Gastrocnemius medialis (tissue), 4 donors: ENCODE measurements at regions of chr19 and their contacts with region 1.

Region 1: DNA sequence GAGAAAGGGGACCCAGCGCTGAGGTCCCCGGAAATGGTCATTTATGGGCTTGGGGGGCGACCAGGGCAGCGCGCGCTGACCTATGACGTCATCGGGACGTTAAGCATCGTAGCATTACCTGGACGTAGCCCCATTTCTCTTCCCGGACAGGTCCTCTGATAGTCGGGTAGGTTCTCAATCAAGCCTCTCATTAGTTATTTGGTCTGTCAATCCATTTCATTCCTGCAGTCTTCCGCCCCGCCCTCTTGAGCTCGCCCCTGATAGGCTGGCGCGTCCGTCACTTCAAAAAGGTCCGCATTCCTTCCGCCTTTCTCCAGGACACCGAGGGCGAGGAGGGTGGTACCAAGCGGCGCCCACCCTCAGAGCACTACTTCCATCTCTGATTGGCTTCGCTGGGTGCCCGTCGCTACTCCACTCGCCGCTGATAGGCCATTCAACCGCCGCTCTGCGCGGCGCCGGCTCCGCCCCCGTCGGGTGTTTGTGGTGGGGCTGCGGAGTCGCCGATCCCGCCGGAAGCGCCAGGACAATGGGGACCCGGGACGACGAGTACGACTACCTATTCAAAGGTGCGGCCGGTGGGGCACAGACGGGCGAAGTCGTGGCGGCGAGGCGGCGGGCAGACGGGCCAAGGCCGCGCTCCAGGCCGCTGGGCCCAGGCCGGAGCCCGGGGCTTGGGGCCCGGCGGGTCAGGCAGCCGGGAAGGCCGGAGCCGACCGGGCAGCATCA is at the start of gene RAB11B:
- DNase-seq: peak; percentile 99 to 100
- ATAC-seq: peak; percentile 85 to 88
- H3K4me3 ChIP-seq: peak within 1 kb of the TSS; percentile 68 to 100 (median 72)
- H3K27ac ChIP-seq: peak within 1 kb of the TSS; percentile 96 to 100 (median 100)
- H3K4me1 ChIP-seq: peaks cover 46 to 53% of the 10 kb centered on the region in 2 donors
- H3K27me3 ChIP-seq: no peaks in the 10 kb centered on the region
- CTCF ChIP-seq: no peak
- POLR2A ChIP-seq: peak; percentile 69 to 79
- total RNA-seq, gene RAB11B: 13.4 to 42.9 (median 31.0) TPM

Region 2: DNA sequence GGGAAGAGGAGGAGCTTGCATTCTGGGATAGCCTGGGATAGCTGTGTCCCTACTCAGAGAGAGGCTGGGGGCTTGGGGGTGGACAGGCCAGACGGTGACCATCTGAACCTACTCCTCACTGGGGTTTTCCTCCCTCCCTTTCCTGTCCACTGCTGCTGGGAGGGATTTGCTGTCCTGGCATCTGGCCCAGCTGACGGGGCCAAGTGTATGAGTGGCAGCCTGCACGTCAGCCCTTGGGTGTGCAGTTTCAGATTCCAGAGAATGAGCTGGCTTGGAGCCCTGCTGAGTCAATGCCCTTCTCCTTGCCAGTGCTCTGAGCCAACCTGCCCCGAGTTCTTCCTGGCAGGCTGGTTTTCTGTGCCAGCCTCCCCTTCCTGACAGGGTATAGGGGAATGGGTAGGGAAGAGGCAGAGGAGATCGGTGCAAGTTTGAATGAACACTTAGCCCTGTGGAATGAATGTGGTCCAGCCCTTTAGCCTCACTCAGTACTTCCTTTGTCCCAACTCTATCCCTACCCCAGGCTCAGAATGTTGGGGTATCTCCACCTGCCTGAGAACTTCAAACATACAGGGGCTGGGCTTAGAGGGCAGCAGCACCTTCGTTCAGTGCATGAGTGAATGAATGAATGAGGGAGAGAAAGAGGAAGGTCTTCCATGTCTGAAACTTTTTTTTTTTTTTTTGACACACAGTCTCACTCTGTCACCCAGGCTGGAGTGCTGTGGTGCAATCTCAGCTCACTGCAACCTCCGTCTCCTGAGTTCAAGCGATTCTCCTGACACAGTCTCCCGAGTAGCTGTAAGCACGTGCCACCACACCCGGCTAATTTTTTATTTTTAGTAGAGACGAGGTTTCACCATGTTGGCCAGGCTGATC is 27.9 kb before region 1 on chr19:
- in situ Hi-C with region 1: loop called in 1 of 4 experiments (anchors 5 kb)
- intact Hi-C with region 1: loop called (anchors 1 kb)
- DNase-seq: peak; percentile 97 to 99
- ATAC-seq: peak; percentile 88 to 93
- H3K4me3 ChIP-seq: peak overlapping the region; percentile 35 to 80 (median 59)
- H3K27ac ChIP-seq: peak overlapping the region; percentile 89 to 99 (median 95)
- H3K4me1 ChIP-seq: peaks cover 36 to 63% of the 10 kb centered on the region in 2 donors
- H3K27me3 ChIP-seq: no peaks in the 10 kb centered on the region
- CTCF ChIP-seq: no peak
- POLR2A ChIP-seq: no peak

Region 3: GRCh38 chr19:8367327-8368001 is 22.6 kb before region 1 on chr19:
- in situ Hi-C with region 1: no loop called
- intact Hi-C with region 1: loop called (anchors 1 kb)
- DNase-seq: peak; percentile 81 to 90
- ATAC-seq: peak; percentile 59 to 61
- H3K4me3 ChIP-seq: peak overlapping the region; percentile 47 to 87 (median 78)
- H3K27ac ChIP-seq: peak overlapping the region; percentile 66 to 99 (median 88)
- H3K4me1 ChIP-seq: peaks cover 38 to 54% of the 10 kb centered on the region in 2 donors
- H3K27me3 ChIP-seq: no peaks in the 10 kb centered on the region
- CTCF ChIP-seq: no peak
- POLR2A ChIP-seq: peak in 1 of 2 donors; percentile 14